ENCODE measurements at regions of chr7 and their contacts with region 1.

Region 1: DNA sequence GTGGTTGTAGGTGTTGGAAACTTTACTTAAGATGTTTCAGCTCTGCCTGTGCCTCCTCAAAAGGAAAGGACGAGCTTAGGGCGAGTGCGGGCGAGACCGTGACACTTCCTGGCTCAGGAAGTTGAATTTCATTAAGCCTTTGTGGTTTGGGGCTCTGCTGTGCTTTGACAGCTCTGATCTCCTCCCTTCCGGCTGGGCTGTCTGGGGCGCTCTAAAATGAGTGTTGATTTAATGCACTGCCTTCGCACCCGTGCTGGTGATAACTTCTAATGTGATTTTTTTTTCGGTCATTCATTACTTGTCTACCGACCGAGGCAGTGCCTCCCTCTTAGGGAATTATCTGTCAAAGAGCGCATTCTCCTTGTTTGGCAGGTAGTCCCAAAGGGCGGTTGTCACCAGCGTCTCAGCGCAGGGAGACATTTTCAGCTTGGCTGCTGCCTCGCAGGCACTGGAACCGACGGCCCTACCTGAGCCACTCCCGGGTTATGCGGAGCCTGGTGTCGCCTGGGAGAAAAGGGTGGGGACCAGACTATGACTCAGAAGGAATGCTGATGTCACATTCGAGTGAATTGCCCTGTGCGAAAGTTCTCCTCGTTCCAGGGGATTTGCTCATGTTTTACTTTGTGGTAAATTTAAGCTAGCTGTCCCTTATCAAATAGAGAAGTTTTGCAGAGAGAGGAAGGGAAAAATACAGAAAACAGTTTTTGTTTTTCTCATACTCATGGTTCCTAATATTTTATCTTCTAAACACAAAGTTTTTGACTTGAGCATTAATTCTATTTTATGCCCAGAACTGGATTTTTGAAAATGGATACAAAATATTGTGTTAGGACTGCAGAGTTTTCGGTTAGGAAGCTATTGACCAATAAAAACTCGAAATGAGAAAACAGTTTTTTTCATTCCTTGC is 920 bp downstream of the TES start:
- DNase-seq: peak; percentile 68
- H3K4me3 Mint-ChIP-seq: peak overlapping the region; percentile 95
- H3K27ac Mint-ChIP-seq: peak overlapping the region; percentile 91
- H3K4me1 Mint-ChIP-seq: peaks cover 52% of the 10 kb centered on the region
- H3K27me3 Mint-ChIP-seq: peaks cover 2% of the 10 kb centered on the region

Region 2: GRCh38 chr7:114922016-114922651 is 1289.1 kb before region 1 on chr7 and contains the start of gene MDFIC:
- intact Hi-C with region 1: loop called (anchors 10 kb)
- DNase-seq: peak; percentile 56
- H3K4me3 Mint-ChIP-seq: peak within 1 kb of the TSS; percentile 96
- H3K27ac Mint-ChIP-seq: peak within 1 kb of the TSS; percentile 97
- H3K4me1 Mint-ChIP-seq: peaks cover 63% of the 10 kb centered on the region
- H3K27me3 Mint-ChIP-seq: no peaks in the 10 kb centered on the region
- total RNA-seq, gene MDFIC: 114 and 136 TPM in 2 replicates

Region 3: DNA sequence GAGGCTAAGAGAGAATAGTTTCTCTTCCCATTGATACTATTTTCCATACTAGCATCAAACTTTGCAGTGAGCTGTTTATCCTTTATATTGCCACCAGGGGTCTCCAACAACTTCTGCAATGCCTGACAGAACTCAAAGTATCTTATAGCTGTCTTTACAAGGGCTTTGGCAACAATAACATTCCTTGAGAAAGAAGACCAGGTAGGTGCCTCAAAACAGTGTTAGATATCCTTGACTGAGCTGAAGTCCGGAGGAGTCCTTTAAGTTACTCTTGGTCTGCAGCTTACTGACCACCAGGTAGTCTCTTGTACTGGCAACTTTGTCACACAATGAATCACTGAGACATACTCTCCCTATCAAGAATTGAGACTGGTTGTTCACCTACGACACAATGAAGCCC is 31.0 kb before region 1 on chr7:
- intact Hi-C with region 1: loop called (anchors 1 kb)
- DNase-seq: peak; percentile 13
- H3K4me3 Mint-ChIP-seq: no peak overlapping the region
- H3K27ac Mint-ChIP-seq: no peak overlapping the region
- H3K4me1 Mint-ChIP-seq: no peaks in the 10 kb centered on the region
- H3K27me3 Mint-ChIP-seq: peaks cover 2% of the 10 kb centered on the region

Region 4: DNA sequence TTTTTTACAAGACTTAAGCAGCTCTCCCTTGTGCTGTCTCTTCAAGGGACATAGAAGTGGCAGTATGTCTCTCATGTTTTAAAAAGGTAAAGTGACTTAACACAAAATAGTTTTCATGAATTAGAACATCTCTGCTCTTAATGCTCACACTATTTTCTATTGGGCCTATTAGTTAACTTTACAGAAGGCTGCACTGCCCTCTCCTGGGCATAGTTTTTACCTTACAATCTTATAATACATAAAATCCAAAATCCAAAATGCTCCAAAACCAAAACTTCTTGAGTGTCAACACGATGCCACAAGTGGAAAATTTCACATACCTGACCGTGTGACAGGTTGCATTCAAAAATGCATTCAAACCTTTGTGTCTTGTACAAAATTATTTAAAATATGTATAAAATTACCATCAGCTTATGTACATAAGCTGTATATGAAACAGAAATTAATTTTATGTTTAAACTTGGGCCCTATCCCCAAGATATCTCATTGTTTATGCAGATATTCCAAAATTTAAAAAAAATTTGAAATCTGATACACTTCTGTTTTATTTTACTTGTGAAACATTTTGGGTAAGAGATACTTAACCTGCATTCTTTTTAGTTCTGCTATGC is 24.9 kb after region 1 on chr7:
- intact Hi-C with region 1: loop called (anchors 1 kb)
- DNase-seq: peak; percentile 16
- H3K4me3 Mint-ChIP-seq: no peak overlapping the region
- H3K27ac Mint-ChIP-seq: no peak overlapping the region
- H3K4me1 Mint-ChIP-seq: peaks cover 23% of the 10 kb centered on the region
- H3K27me3 Mint-ChIP-seq: no peaks in the 10 kb centered on the region

Region 5: DNA sequence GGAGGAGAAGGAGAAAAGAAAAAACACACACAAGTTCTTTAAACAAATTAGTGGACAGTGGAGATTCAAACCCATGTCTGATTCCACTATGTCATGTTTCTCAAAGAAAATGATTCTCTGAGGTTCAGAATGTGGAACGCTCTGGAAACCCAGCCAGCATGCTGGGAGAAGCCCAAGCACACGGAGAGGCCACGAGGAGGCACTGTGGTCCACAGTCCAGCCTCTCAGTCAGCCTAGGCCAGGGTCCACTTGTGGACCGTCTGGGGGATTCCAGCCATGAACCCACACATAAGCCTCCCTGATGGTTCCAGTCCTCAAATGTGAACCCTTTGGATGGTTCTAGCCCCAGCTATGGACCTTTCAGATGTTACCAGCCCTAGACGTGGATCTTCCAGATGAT is 387.0 kb after region 1 on chr7:
- intact Hi-C with region 1: no loop called
- DNase-seq: no peak
- H3K4me3 Mint-ChIP-seq: no peak overlapping the region
- H3K27ac Mint-ChIP-seq: no peak overlapping the region
- H3K4me1 Mint-ChIP-seq: peaks cover 7% of the 10 kb centered on the region
- H3K27me3 Mint-ChIP-seq: peaks cover 25% of the 10 kb centered on the region

Region 6: GRCh38 chr7:118183786-118184564 is 1972.7 kb after region 1 on chr7 and contains the start of gene LSM8:
- intact Hi-C with region 1: loop called (anchors 10 kb)
- DNase-seq: peak; percentile 97
- H3K4me3 Mint-ChIP-seq: peak within 1 kb of the TSS; percentile 97
- H3K27ac Mint-ChIP-seq: peak within 1 kb of the TSS; percentile 99
- H3K4me1 Mint-ChIP-seq: peaks cover 40% of the 10 kb centered on the region
- H3K27me3 Mint-ChIP-seq: no peaks in the 10 kb centered on the region
- total RNA-seq, gene LSM8: 45.9 and 46.7 TPM in 2 replicates